ENCODE measurements at regions of chr7 and their contacts with region 1.

Region 1: DNA sequence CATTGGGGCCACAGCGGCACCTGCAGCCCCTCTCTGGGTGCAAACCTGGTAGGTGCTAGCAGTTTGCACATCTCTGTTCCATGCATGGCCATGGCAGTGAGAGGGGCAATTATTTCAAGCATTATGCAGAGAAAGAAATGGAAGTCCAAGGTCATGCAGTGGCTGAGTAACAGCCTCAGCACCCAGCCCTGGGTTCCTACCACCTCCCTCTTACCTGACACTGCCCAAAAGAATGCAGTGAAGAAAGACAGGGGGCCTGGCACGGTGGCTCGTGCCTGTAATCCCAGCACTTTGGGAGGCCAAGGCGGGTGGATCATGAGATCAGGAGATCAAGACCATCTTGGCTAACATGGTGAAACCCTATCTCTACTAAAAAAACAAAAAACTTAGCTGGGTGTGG is 4.9 kb upstream of the CHST12 start:
- DNase-seq: no peak
- H3K4me3 ChIP-seq: no peak overlapping the region
- H3K27ac ChIP-seq: no peak overlapping the region
- H3K4me1 ChIP-seq: peaks cover 14% of the 10 kb centered on the region
- H3K27me3 ChIP-seq: no peaks in the 10 kb centered on the region
- CTCF ChIP-seq: no peak

Region 2: GRCh38 chr7:1676550-1677078 is 721.9 kb before region 1 on chr7:
- CTCF ChIA-PET with region 1: no interaction called
- POLR2A ChIA-PET with region 1: interaction called, 12 read pairs
- intact Hi-C with region 1: no loop called
- DNase-seq: no peak
- H3K4me3 ChIP-seq: no peak overlapping the region
- H3K27ac ChIP-seq: no peak overlapping the region
- H3K4me1 ChIP-seq: no peaks in the 10 kb centered on the region
- H3K27me3 ChIP-seq: peaks cover 46% of the 10 kb centered on the region
- CTCF ChIP-seq: no peak

Measured in A673 (cell line).